Naive thymus-derived CD4-positive, alpha-beta T cell (primary cell): ENCODE measurements at regions of chr19 and their contacts with region 1.

Region 1: GRCh38 chr19:5947435-5947834 is 30.5 kb downstream of the RANBP3 start:
- DNase-seq: no peak
- ATAC-seq: peak; percentile 68
- H3K4me3 ChIP-seq: no peak overlapping the region
- H3K4me3 Mint-ChIP-seq: peak overlapping the region in 9 of 10 donors; percentile 16 to 82 (median 60)
- H3K27ac ChIP-seq: no peak overlapping the region
- H3K27ac Mint-ChIP-seq: peak overlapping the region in 7 of 9 donors; percentile 64 to 99 (median 89)
- H3K4me1 ChIP-seq: peaks cover 28 to 59% of the 10 kb centered on the region in 2 donors
- H3K4me1 Mint-ChIP-seq: peaks cover 57 to 88% (median 77%) of the 10 kb centered on the region in 7 donors
- H3K27me3 ChIP-seq: no peaks in the 10 kb centered on the region
- H3K27me3 Mint-ChIP-seq: no peaks in the 10 kb centered on the region

Region 2: GRCh38 chr19:5934774-5935472 is 12.5 kb before region 1 on chr19:
- CTCF ChIA-PET with region 1: no interaction called
- POLR2A ChIA-PET with region 1: interaction called, 13 read pairs
- intact Hi-C with region 1: no loop called
- DNase-seq: no peak
- ATAC-seq: no peak
- H3K4me3 ChIP-seq: no peak overlapping the region
- H3K4me3 Mint-ChIP-seq: no peak overlapping the region
- H3K27ac ChIP-seq: no peak overlapping the region
- H3K27ac Mint-ChIP-seq: peak overlapping the region in 1 of 9 donors; percentile 54
- H3K4me1 ChIP-seq: no peaks in the 10 kb centered on the region
- H3K4me1 Mint-ChIP-seq: peaks cover 0 to 9% (median 4%) of the 10 kb centered on the region in 7 donors
- H3K27me3 ChIP-seq: no peaks in the 10 kb centered on the region
- H3K27me3 Mint-ChIP-seq: no peaks in the 10 kb centered on the region

Region 3: GRCh38 chr19:5961969-5962945 is 14.8 kb after region 1 on chr19:
- CTCF ChIA-PET with region 1: interaction called, 21 read pairs
- POLR2A ChIA-PET with region 1: interaction called, 89 read pairs
- intact Hi-C with region 1: loop called (anchors 1 to 2 kb)
- DNase-seq: peak; percentile 42 to 92 (median 88)
- ATAC-seq: peak; percentile 96
- H3K4me3 ChIP-seq: peak overlapping the region; percentile 38
- H3K4me3 Mint-ChIP-seq: peak overlapping the region; percentile 79 to 89 (median 84)
- H3K27ac ChIP-seq: peak overlapping the region; percentile 77
- H3K27ac Mint-ChIP-seq: peak overlapping the region; percentile 95 to 100 (median 99)
- H3K4me1 ChIP-seq: peaks cover 56 to 84% of the 10 kb centered on the region in 2 donors
- H3K4me1 Mint-ChIP-seq: peaks cover 69 to 99% (median 89%) of the 10 kb centered on the region in 7 donors
- H3K27me3 ChIP-seq: no peaks in the 10 kb centered on the region
- H3K27me3 Mint-ChIP-seq: no peaks in the 10 kb centered on the region

Region 4: DNA sequence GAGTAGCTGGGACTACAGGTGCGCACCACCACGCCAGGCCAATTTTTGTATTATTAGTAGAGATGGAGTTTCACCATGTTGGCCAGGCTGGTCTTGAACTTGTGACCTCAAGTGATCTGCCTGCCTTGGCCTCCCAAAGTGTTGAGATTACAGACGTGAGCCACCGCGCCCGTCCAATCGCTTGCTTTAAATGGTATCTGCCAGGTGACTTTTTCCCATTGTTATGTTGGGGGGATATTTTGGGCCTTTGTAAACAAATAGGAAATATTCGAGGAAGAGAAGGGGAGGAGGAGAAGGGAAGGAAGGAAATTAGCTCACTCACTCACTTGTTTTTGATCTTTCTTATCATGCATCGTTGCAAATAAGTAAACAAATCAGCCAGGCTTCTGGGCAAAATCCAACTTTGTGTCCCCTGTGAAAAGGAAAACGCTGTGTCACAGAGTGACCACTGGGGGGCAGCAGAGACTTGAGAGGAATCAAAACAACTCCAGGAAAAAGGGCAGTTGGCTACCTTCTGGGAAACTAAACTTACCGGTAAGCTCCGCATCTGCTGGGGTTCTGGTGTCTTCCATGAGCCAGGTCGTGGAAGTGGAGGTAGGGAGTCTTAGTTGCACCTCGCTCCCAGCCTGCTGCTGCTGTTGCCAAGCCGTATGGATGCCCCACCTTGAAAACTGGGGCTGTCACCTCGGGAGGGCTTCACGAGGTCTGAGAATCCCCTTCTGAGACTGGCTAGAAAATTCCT is 39.8 kb after region 1 on chr19:
- CTCF ChIA-PET with region 1: interaction called, 3 read pairs
- POLR2A ChIA-PET with region 1: no interaction called
- intact Hi-C with region 1: loop called in 1 of 2 experiments (anchors 2 kb)
- DNase-seq: peak; percentile 52 to 71 (median 64)
- ATAC-seq: peak; percentile 85
- H3K4me3 ChIP-seq: peak overlapping the region; percentile 69
- H3K4me3 Mint-ChIP-seq: peak overlapping the region; percentile 61 to 82 (median 76)
- H3K27ac ChIP-seq: peak overlapping the region; percentile 32
- H3K27ac Mint-ChIP-seq: peak overlapping the region in 6 of 9 donors; percentile 1 to 66 (median 33)
- H3K4me1 ChIP-seq: peaks cover 0 to 5% of the 10 kb centered on the region in 2 donors
- H3K4me1 Mint-ChIP-seq: peaks cover 8 to 47% (median 18%) of the 10 kb centered on the region in 7 donors
- H3K27me3 ChIP-seq: no peaks in the 10 kb centered on the region
- H3K27me3 Mint-ChIP-seq: no peaks in the 10 kb centered on the region

Region 5: DNA sequence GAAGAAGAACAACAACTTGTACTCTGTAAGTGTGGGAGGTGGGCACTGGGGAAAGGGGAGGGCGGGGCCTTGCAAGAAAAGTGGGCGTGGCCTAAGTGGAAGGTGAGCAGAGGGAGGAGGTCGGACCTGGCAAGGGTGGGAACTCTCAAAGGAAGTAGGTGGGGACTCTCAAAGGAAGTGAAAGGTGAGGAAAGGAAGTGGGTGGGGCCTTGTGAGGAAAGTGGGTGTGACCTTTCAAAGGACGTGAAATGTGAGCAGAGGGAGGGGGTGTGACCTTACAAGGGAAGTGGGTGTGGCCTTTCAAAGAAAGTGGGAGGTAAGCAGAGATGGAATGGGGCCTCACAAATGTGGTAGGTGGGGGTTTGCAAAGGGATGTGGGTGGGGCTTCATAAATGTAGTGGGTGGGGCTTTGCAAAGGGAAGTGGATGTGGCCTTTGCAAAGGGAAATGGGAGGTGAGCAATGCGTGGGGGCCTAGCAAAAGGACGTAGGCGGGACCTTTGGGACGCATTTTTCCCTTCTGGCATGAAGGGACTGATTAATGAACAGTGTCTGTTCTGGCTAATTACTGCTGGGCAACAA is 213.9 kb after region 1 on chr19:
- CTCF ChIA-PET with region 1: no interaction called
- POLR2A ChIA-PET with region 1: no interaction called
- intact Hi-C with region 1: no loop called
- DNase-seq: peak; percentile 10 to 94 (median 78)
- ATAC-seq: peak; percentile 89
- H3K4me3 ChIP-seq: peak overlapping the region; percentile 13
- H3K4me3 Mint-ChIP-seq: peak overlapping the region in 9 of 10 donors; percentile 19 to 75 (median 38)
- H3K27ac ChIP-seq: no peak overlapping the region
- H3K27ac Mint-ChIP-seq: peak overlapping the region in 8 of 9 donors; percentile 33 to 88 (median 74)
- H3K4me1 ChIP-seq: peaks cover 4 to 8% of the 10 kb centered on the region in 2 donors
- H3K4me1 Mint-ChIP-seq: peaks cover 0 to 26% (median 11%) of the 10 kb centered on the region in 7 donors
- H3K27me3 ChIP-seq: no peaks in the 10 kb centered on the region
- H3K27me3 Mint-ChIP-seq: peaks cover 0 to 2% (median 0%) of the 10 kb centered on the region in 5 donors